CD8-positive, alpha-beta T cell (primary cell): ENCODE measurements at regions of chr4 and their contacts with region 1.

Region 1: GRCh38 chr4:83591056-83591455 is 55.1 kb downstream of the GPAT3 start:
- DNase-seq: no peak
- ATAC-seq: no peak
- H3K4me3 ChIP-seq: no peak overlapping the region
- H3K4me3 Mint-ChIP-seq: no peak overlapping the region
- H3K27ac ChIP-seq: no peak overlapping the region
- H3K27ac Mint-ChIP-seq: no peak overlapping the region
- H3K4me1 ChIP-seq: no peaks in the 10 kb centered on the region
- H3K4me1 Mint-ChIP-seq: no peaks in the 10 kb centered on the region
- H3K27me3 ChIP-seq: no peaks in the 10 kb centered on the region
- H3K27me3 Mint-ChIP-seq: no peaks in the 10 kb centered on the region
- CTCF ChIP-seq: no peak

Region 2: GRCh38 chr4:82851885-82852750 is 738.9 kb before region 1 on chr4:
- CTCF ChIA-PET with region 1: no interaction called
- POLR2A ChIA-PET with region 1: no interaction called
- intact Hi-C with region 1: loop called in 1 of 2 experiments (anchors 5 kb)
- DNase-seq: peak in 2 of 9 experiments; percentile 46 to 60
- ATAC-seq: peak; percentile 54
- H3K4me3 ChIP-seq: no peak overlapping the region
- H3K4me3 Mint-ChIP-seq: no peak overlapping the region
- H3K27ac ChIP-seq: no peak overlapping the region
- H3K27ac Mint-ChIP-seq: no peak overlapping the region
- H3K4me1 ChIP-seq: no peaks in the 10 kb centered on the region
- H3K4me1 Mint-ChIP-seq: no peaks in the 10 kb centered on the region
- H3K27me3 ChIP-seq: no peaks in the 10 kb centered on the region
- H3K27me3 Mint-ChIP-seq: no peaks in the 10 kb centered on the region
- CTCF ChIP-seq: peak; percentile 65